Activated T-helper 1 cell treated with anti-CD3 and anti-CD28 coated beads, Interleukin-12 subunit alpha, Interleukin-12 subunit beta, Interleukin-2, Interleukin-4 antibody, amounts not matched to agents 30 ng/mL and 10 ng/mL and 1 ng/mL, durations not matched to agents 14 hours and 24 hours and 36 hours (primary cell): ENCODE measurements at regions of chr12 and their contacts with region 1.

Region 1: DNA sequence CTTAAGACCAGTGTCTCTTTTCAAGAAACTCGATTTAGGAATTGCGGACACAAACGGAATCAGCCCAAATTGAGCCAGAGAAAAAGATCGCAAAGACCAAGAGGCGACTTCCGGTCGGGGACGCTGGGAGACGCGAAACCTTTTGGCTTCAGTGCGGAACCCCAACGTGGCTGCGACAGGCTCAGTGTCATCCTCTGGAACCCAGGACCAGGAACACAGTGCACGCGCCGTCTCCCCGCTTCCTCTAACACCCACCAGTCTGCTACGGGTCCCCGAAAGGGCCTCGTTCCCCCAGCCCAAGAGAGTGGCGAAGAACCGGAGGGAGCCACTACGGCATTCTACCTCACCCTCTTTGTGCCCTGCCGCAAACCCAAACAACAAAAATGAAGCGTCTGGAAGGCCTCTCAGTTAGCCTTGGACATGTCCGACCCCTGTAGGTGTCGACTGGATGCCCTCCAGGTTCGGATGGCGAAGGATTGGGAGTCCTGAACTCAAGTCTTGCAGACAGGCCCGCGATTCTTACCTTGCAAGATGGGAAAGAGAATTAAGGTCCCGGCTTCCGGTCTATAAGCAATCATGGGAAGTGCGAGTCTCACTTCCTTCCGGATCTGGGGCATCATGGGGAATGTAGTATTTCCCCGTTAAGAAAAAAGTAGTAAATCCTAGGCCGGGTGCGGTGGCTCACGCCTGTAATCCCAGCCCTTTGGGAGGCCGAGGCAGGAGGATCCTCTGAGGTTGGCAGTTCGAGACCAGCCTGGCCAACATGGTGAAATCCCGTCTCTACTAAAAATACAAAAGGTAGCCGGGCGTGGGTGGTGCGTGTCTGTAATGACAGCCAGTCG is at the start of gene RPL6:
- DNase-seq: peak; percentile 75
- H3K4me3 Mint-ChIP-seq: peak within 1 kb of the TSS; percentile 100
- H3K27ac Mint-ChIP-seq: peak within 1 kb of the TSS; percentile 100
- H3K4me1 Mint-ChIP-seq: peaks cover 33% of the 10 kb centered on the region
- H3K27me3 Mint-ChIP-seq: no peaks in the 10 kb centered on the region
- total RNA-seq, gene RPL6: 1,690 and 1,698 TPM in 2 replicates

Region 2: GRCh38 chr12:112198120-112198733 is 211.1 kb before region 1 on chr12:
- intact Hi-C with region 1: loop called (anchors 1 kb)
- DNase-seq: peak; percentile 31
- H3K4me3 Mint-ChIP-seq: no peak overlapping the region
- H3K27ac Mint-ChIP-seq: no peak overlapping the region
- H3K4me1 Mint-ChIP-seq: no peaks in the 10 kb centered on the region
- H3K27me3 Mint-ChIP-seq: no peaks in the 10 kb centered on the region